Posterior cingulate gyrus (tissue), 11 donors: ENCODE measurements at regions of chr3 and their contacts with region 1.

Region 1: DNA sequence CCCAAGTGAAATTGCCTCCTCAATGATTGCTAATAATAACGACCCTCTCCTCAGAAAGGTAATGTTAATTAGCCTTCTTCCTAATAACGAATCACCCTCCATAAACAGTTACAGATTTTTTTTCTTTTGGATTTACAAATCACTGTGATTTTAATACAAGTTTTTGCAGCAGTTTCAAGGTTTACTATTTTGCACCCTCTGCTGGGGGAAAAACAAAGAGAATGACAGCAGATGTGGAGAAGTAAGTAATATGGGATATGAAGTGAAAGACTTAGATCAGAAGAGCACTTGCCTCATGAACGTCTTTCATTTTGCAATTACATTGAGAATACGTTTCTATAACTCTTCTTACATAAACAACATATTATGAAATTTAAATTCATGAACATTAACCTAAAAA is 16.1 kb upstream of the CNTN3 start:
- DNase-seq: no peak

Region 2: GRCh38 chr3:74267588-74268184 is 362.9 kb before region 1 on chr3:
- intact Hi-C with region 1: loop called (anchors 5 kb)
- DNase-seq: peak in 1 of 10 donors; percentile 20

Region 3: DNA sequence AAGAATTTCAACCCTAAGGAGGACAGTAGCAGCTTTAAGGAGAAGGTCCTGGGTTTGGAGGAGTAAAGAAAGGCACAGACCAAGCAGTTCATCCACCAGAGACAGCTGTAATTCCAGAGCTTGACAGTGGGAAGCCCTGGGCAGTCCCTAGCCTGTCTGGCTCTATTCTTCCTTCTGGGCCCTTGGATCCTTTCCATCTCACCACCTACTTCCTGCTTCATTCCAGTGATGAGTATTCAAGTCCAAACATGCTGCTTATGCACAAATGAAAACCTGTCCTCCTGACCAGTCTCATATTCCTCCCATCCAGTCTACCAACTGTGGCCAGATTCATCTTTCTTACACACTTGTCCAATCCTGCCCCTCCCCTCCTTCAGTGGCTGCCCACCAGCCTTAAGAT is 187.5 kb before region 1 on chr3:
- intact Hi-C with region 1: no loop called
- DNase-seq: no peak